PC-3 (cell line): ENCODE measurements at regions of chr17 and their contacts with region 1.

Region 1: GRCh38 chr17:36602924-36603384 is 1.6 kb downstream of the MRM1 start:
- DNase-seq: peak; percentile 72
- ATAC-seq: peak; percentile 10; the same call in 1 of the 2 replicates
- H3K4me3 ChIP-seq: peak overlapping the region; percentile 80
- H3K27ac ChIP-seq: 0 out of 2 replicates have a peak overlapping the region, but pooled peaks have one; percentile 68
- H3K4me1 ChIP-seq: peaks cover 6% of the 10 kb centered on the region
- H3K27me3 ChIP-seq: no peaks in the 10 kb centered on the region
- CTCF ChIP-seq: peak; percentile 67

Region 2: DNA sequence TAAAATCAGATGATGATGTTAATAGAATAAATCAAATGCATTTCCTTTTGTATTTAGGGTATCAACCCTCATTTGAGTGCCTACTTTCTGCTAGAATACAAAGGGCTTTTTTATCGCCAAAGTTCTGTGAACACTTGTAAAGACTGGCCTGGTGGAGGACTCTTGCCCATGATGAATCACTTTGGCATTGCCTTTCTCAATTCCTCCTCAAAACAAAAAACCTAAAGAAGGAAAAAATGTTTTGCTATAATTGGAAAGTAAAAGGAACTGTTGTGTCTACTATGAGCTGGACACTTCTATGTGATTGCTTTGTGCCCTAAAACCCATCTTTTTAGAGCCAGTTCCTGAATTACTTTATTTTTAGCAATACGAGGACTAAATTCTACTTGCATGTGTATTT is 24.3 kb before region 1 on chr17:
- CTCF ChIA-PET with region 1: no interaction called
- POLR2A ChIA-PET with region 1: no interaction called
- intact Hi-C with region 1: no loop called
- DNase-seq: no peak
- ATAC-seq: no peak
- H3K4me3 ChIP-seq: no peak overlapping the region
- H3K27ac ChIP-seq: no peak overlapping the region
- H3K4me1 ChIP-seq: no peaks in the 10 kb centered on the region
- H3K27me3 ChIP-seq: no peaks in the 10 kb centered on the region
- CTCF ChIP-seq: no peak

Region 3: DNA sequence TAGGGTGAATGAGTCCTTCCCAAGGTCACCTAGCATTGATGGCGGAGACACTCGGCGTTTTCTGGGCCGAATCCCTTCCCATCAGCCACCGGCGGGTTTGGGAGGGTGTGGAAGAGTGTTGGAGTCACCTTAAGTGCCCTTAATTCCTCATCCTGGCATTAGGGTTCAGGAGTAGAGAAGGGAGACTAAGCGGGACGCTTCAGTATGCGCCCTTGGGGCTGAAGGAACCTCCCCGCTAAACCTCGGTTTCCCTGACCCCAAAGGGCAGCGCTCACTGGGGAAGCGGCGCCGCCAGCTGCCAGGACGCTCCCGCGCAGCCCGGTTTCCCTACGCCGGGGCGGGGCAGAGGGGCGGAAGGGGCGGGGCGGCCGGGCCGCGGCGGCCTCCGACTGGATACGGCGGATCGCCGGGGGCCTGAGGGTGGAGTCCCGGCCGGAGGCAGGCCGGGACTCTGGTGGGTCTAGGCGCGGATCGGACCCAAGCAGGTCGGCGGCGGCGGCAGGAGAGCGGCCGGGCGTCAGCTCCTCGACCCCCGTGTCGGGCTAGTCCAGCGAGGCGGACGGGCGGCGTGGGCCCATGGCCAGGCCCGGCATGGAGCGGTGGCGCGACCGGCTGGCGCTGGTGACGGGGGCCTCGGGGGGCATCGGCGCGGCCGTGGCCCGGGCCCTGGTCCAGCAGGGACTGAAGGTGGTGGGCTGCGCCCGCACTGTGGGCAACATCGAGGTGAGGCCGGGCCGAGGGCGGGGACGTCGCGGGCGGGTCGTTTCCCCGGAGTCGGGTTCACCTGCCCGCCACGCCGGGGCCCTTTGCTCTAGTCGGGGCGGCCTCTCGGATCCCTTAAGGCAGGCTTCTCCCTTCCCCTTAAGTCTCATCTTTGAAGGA is 11.3 kb before region 1 on chr17 and contains the start of gene DHRS11:
- CTCF ChIA-PET with region 1: interaction called, 17 read pairs
- POLR2A ChIA-PET with region 1: no interaction called
- intact Hi-C with region 1: no loop called
- DNase-seq: peak; percentile 67
- ATAC-seq: peak; percentile 94
- H3K4me3 ChIP-seq: peak within 1 kb of the TSS; percentile 80
- H3K27ac ChIP-seq: no peak within 1 kb of the TSS
- H3K4me1 ChIP-seq: peaks cover 10% of the 10 kb centered on the region; the same call in 1 of the 2 replicates
- H3K27me3 ChIP-seq: no peaks in the 10 kb centered on the region
- CTCF ChIP-seq: no peak
- total RNA-seq, gene DHRS11: 11.8 and 14.8 TPM in 2 replicates

Region 4: GRCh38 chr17:37037590-37038155 is 434.7 kb after region 1 on chr17:
- CTCF ChIA-PET with region 1: interaction called, 11 read pairs
- POLR2A ChIA-PET with region 1: no interaction called
- intact Hi-C with region 1: no loop called
- DNase-seq: no peak
- ATAC-seq: no peak
- H3K4me3 ChIP-seq: no peak overlapping the region
- H3K27ac ChIP-seq: no peak overlapping the region
- H3K4me1 ChIP-seq: no peaks in the 10 kb centered on the region
- H3K27me3 ChIP-seq: no peaks in the 10 kb centered on the region
- CTCF ChIP-seq: no peak